ENCODE measurements at regions of chr11 and their contacts with region 1.

Region 1: GRCh38 chr11:11813288-11813962 is 28.3 kb upstream of the USP47 start:
- DNase-seq: peak; percentile 24
- H3K4me3 ChIP-seq: no peak overlapping the region
- H3K27ac ChIP-seq: peak overlapping the region; percentile 4 to 72 (median 60)
- H3K4me1 ChIP-seq: peaks cover 0 to 5% (median 1%) of the 10 kb centered on the region in 4 donors
- H3K27me3 ChIP-seq: no peaks in the 10 kb centered on the region
- CTCF ChIP-seq: no peak
- EP300 ChIP-seq: no peak
- POLR2A ChIP-seq: no peak

Region 2: DNA sequence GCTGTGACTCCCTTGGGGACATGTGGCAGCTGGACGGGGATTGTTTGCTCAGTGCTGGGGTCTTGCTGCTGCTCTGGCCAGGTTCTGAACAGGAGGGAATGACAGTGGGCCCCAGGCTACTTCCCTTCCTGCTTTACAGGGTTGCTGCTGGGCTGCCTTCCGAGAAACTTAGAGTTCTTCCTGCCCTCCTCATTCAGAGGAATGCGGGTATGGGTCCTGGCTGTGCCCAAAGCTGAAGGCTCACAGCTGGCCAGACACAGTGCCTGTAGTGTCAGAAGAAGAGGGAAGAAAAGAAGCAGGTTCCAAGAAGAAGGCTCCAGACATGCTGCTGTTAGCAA is 455.6 kb after region 1 on chr11:
- in situ Hi-C with region 1: loop called in 1 of 4 experiments (anchors 25 kb)
- intact Hi-C with region 1: loop called (anchors 10 kb)
- DNase-seq: no peak
- H3K4me3 ChIP-seq: no peak overlapping the region
- H3K27ac ChIP-seq: peak overlapping the region; percentile 30 to 61 (median 43)
- H3K4me1 ChIP-seq: peaks cover 0 to 19% (median 12%) of the 10 kb centered on the region in 4 donors
- H3K27me3 ChIP-seq: no peaks in the 10 kb centered on the region
- CTCF ChIP-seq: no peak
- EP300 ChIP-seq: no peak
- POLR2A ChIP-seq: no peak

Region 3: GRCh38 chr11:13294771-13295579 is 1481.5 kb after region 1 on chr11:
- in situ Hi-C with region 1: no loop called
- intact Hi-C with region 1: loop called (anchors 5 kb)
- DNase-seq: no peak
- H3K4me3 ChIP-seq: no peak overlapping the region
- H3K27ac ChIP-seq: no peak overlapping the region
- H3K4me1 ChIP-seq: peaks cover 0 to 28% (median 4%) of the 10 kb centered on the region in 4 donors
- H3K27me3 ChIP-seq: no peaks in the 10 kb centered on the region
- CTCF ChIP-seq: no peak
- EP300 ChIP-seq: no peak
- POLR2A ChIP-seq: no peak

Measured in transverse colon (tissue), 4 donors.